Activated T-helper 1 cell treated with anti-CD3 and anti-CD28 coated beads, Interleukin-12 subunit alpha, Interleukin-12 subunit beta, Interleukin-2, Interleukin-4 antibody, amounts not matched to agents 30 ng/mL and 10 ng/mL and 1 ng/mL, durations not matched to agents 14 hours and 24 hours and 36 hours (primary cell): ENCODE measurements at regions of chr7 and their contacts with region 1.

Region 1: GRCh38 chr7:143380255-143380645 is 895 bp upstream of the ZYX start:
- DNase-seq: peak; percentile 76
- H3K4me3 Mint-ChIP-seq: peak overlapping the region; percentile 85
- H3K27ac Mint-ChIP-seq: peak overlapping the region; percentile 70
- H3K4me1 Mint-ChIP-seq: peaks cover 46% of the 10 kb centered on the region
- H3K27me3 Mint-ChIP-seq: no peaks in the 10 kb centered on the region

Region 2: GRCh38 chr7:143240291-143241168 is 139.7 kb before region 1 on chr7:
- intact Hi-C with region 1: loop called (anchors 1 kb)
- DNase-seq: peak; percentile 65
- H3K4me3 Mint-ChIP-seq: no peak overlapping the region
- H3K27ac Mint-ChIP-seq: peak overlapping the region; percentile 74
- H3K4me1 Mint-ChIP-seq: peaks cover 54% of the 10 kb centered on the region
- H3K27me3 Mint-ChIP-seq: peaks cover 8% of the 10 kb centered on the region

Region 3: DNA sequence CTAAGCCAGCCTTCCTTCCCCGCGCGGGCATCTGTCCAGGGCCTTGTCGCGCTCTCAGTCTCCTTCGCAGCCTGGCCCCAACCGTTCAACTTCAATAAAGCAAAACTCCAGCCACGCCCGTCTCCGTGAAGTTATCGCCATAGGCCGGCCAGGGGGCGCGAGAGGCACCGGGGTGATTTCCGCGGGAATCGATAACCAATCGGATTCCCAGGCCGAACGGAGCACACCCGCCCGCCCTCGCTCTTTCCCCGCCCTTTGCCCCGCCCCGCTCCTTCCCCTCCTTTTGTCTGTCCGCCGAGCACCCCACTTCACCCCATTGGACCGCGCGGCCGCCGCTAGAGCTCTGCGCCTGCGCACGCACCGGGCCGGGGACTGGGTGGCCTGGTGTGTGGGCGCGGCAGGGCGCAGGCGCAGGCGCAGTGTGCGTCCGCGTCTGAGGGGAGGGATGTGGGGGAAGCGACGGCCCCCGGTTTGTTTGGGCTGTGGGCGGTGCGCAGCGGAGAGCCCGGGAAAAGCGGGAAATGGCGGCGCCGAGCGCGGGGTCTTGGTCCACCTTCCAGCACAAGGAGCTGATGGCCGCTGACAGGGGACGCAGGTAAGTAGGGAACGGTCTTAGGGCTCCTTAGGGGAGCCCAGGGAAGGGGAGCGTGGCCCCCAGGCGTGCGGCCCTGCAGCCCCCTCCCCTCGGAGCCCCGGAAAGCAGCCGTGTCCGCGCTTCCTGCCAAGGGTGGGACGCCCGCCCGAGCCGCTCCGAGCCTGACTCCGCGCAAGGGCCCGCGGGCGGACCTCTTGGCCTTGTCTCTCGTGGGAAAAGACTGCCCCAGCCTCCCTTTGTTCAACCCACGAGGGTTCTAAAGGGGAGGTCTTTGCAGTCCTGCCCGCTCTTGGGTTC is 92.1 kb before region 1 on chr7 and contains the start of gene CASP2:
- intact Hi-C with region 1: loop called (anchors 1 kb)
- DNase-seq: peak; percentile 98
- H3K4me3 Mint-ChIP-seq: peak within 1 kb of the TSS; percentile 94
- H3K27ac Mint-ChIP-seq: peak within 1 kb of the TSS; percentile 92
- H3K4me1 Mint-ChIP-seq: peaks cover 63% of the 10 kb centered on the region
- H3K27me3 Mint-ChIP-seq: no peaks in the 10 kb centered on the region
- total RNA-seq, gene CASP2: 107 and 110 TPM in 2 replicates

Region 4: DNA sequence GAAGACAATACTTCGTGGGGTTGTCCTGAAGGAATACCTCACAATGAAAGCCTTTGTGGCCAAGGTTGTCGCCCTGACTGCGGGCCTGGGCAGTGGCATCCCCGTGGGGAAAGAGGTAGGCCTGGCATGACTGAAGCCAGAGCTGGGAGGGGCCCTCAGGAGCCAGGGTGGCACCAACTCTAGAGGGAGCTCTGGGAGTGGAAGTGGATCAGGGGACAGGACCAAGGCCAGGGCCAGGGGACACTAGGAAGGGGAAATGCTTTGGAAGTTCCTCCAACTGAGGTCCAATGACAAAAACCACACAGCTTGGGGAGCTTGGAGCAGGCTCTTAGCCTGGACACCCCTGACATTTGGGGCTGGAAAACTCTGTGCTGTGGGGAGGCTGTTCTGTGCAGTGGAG is 58.5 kb before region 1 on chr7:
- intact Hi-C with region 1: no loop called
- DNase-seq: no peak
- H3K4me3 Mint-ChIP-seq: no peak overlapping the region
- H3K27ac Mint-ChIP-seq: no peak overlapping the region
- H3K4me1 Mint-ChIP-seq: peaks cover 12% of the 10 kb centered on the region
- H3K27me3 Mint-ChIP-seq: peaks cover 7% of the 10 kb centered on the region

Region 5: DNA sequence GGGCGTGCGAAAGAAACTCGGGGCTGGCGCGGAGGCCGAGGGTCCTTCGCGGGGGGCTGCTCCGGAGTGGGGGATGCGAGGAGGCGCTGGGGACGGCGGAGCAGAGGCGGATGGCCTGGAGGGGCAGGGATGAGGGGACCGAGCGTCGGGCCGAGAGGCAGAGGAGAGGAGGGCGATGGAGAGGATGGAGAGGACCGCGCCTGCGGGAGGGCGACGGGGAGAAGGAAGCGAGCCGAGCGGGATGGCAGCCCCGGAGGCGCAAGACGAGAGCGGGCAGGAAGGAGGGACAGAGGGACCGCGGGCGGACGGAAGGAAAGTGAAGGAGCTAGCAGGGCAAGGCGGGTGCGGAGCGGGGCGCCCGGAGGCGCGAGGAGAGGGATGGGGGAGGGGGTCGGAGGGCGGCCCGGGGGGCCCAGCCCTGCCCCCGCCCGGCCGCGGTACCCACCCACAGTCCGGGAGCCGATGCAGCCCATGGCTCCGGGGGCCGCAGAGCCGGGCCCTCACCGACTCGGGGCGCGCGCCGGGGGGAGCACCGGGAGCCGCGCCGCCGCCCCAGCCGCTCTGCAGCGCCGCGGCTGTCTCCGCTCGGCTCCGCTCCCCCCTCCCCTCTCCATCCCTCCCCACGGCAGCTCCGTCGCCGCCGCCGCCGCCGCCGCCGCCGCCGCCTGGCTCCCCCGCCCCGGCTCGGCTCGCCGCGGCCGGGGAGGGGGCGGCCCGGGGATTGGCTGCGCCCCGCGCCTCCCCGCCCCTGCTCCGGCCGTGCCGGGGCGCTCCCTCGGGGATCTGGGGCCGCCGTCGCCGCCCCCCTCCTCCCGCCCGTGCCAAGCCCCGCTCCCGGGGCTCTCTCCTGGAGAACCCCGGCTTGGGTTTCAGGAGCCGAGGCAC is 17.9 kb before region 1 on chr7 and contains the start of gene FAM131B:
- intact Hi-C with region 1: loop called (anchors 1 kb)
- DNase-seq: no peak
- H3K4me3 Mint-ChIP-seq: peak within 1 kb of the TSS; percentile 83
- H3K27ac Mint-ChIP-seq: no peak within 1 kb of the TSS
- H3K4me1 Mint-ChIP-seq: no peaks in the 10 kb centered on the region
- H3K27me3 Mint-ChIP-seq: peaks cover 76% of the 10 kb centered on the region
- total RNA-seq, gene FAM131B: 0.44 and 0.54 TPM in 2 replicates

Region 6: GRCh38 chr7:143416565-143417149 is 36.4 kb after region 1 on chr7:
- intact Hi-C with region 1: loop called (anchors 1 kb)
- DNase-seq: no peak
- H3K4me3 Mint-ChIP-seq: no peak overlapping the region
- H3K27ac Mint-ChIP-seq: no peak overlapping the region
- H3K4me1 Mint-ChIP-seq: peaks cover 4% of the 10 kb centered on the region
- H3K27me3 Mint-ChIP-seq: peaks cover 20% of the 10 kb centered on the region

Region 7: DNA sequence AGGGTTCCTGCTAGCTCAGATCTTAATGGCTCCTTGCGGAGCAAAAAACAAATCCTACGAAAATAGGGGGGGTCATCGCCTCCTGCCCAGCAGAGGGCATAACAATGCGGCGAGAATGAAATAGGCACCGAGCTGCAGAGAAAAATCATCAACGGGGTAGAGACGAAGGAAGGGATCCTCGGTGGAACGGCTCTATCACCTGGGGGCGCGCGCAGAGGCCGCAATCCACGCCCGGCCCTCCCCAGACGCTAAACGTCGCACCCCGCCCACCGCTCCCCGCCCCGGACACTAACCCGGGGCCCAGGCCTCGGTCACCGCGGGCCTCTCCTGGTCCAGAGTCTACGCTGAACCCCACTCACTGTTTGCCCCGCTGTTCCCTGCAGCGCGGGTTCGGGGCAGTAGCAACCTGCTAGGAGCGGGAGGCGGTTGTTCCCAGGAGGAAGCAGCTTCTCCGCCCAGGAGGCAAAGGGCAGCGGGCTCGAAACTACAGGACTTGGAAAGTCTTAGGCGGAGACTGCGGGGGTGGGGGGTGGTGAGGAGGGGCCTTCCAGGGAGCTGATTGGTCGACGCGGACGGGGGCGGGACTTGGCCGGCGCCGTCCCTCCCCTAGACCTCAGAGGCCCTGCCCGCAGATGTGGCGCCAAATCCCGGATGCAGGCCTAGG is 521.5 kb after region 1 on chr7 and contains the start of gene TCAF1:
- intact Hi-C with region 1: loop called (anchors 2 kb)
- DNase-seq: peak; percentile 79
- H3K4me3 Mint-ChIP-seq: peak within 1 kb of the TSS; percentile 88
- H3K27ac Mint-ChIP-seq: peak within 1 kb of the TSS; percentile 88
- H3K4me1 Mint-ChIP-seq: peaks cover 26% of the 10 kb centered on the region
- H3K27me3 Mint-ChIP-seq: no peaks in the 10 kb centered on the region
- total RNA-seq, gene TCAF1: 13.1 and 13.8 TPM in 2 replicates